ENCODE measurements at regions of chr3 and their contacts with region 1.

Region 1: GRCh38 chr3:132722164-132723024 is at the start of gene NPHP3:
- DNase-seq: peak; percentile 75 to 95 (median 87)
- ATAC-seq: peak; percentile 87
- H3K4me3 ChIP-seq: peak within 1 kb of the TSS; percentile 88
- H3K4me3 Mint-ChIP-seq: peak within 1 kb of the TSS; percentile 86 to 95 (median 92)
- H3K27ac ChIP-seq: peak within 1 kb of the TSS; percentile 85
- H3K27ac Mint-ChIP-seq: peak within 1 kb of the TSS; percentile 84 to 95 (median 89)
- H3K4me1 ChIP-seq: peaks cover 16 to 26% of the 10 kb centered on the region in 2 donors
- H3K4me1 Mint-ChIP-seq: peaks cover 17 to 49% (median 43%) of the 10 kb centered on the region in 7 donors
- H3K27me3 ChIP-seq: no peaks in the 10 kb centered on the region
- H3K27me3 Mint-ChIP-seq: peaks cover 0 to 6% (median 0%) of the 10 kb centered on the region in 5 donors
- total RNA-seq, gene NPHP3: 21.8 to 78.9 (median 26.1) TPM

Region 2: DNA sequence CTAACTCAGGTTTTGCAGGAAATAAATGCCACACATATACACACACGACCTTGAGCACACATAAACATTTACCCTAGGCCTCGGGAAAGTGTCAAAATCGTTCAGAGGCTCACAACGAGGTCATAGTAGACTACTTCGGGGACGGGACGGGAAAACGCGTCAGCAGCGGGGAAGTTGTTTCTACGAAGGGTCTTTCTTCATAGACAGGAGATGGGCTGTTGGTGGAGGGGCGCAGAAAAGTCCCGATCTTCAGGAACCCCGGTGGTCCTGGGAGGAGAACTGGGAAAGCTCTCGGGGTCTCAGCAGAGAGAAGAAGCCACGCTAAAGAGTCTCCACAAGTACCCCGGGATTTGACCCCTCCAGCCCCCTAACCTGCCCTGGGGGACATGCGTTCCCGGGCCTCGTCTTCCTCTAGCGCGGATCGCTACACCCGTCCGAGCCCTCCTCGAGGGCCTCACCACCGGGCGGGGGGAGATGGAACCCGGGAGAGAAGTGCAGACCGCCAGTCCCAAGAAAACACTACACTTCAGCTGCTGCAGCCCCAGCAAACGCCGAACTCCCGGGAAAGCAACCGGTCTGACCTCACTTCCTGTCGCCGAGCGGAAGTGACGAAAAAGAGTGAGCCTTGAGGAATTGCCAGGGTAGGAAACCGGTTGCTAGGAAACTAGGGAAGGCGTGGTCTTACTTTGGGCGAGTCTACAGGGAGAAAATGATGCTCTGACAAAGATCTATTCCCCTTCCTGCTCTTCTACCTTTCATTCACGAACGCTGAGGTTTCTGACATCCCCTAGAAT is 1976.0 kb before region 1 on chr3 and contains the start of gene PIK3R4:
- CTCF ChIA-PET with region 1: no interaction called
- POLR2A ChIA-PET with region 1: no interaction called
- intact Hi-C with region 1: loop called (anchors 5 kb)
- DNase-seq: peak; percentile 79 to 98 (median 92)
- ATAC-seq: peak; percentile 87
- H3K4me3 ChIP-seq: peak within 1 kb of the TSS; percentile 87
- H3K4me3 Mint-ChIP-seq: peak within 1 kb of the TSS in 9 of 10 donors; percentile 82 to 97 (median 93)
- H3K27ac ChIP-seq: peak within 1 kb of the TSS; percentile 89
- H3K27ac Mint-ChIP-seq: peak within 1 kb of the TSS; percentile 89 to 99 (median 94)
- H3K4me1 ChIP-seq: peaks cover 5 to 20% of the 10 kb centered on the region in 2 donors
- H3K4me1 Mint-ChIP-seq: peaks cover 35 to 62% (median 50%) of the 10 kb centered on the region in 7 donors
- H3K27me3 ChIP-seq: no peaks in the 10 kb centered on the region
- H3K27me3 Mint-ChIP-seq: peaks cover 0 to 3% (median 0%) of the 10 kb centered on the region in 5 donors
- total RNA-seq, gene PIK3R4: 15.5 to 33.6 (median 27.3) TPM

Region 3: GRCh38 chr3:131502530-131503245 is 1219.7 kb before region 1 on chr3 and contains the start of gene MRPL3:
- CTCF ChIA-PET with region 1: no interaction called
- POLR2A ChIA-PET with region 1: no interaction called
- intact Hi-C with region 1: loop called in 1 of 2 experiments (anchors 10 kb)
- DNase-seq: peak; percentile 68 to 82 (median 78)
- ATAC-seq: peak; percentile 90
- H3K4me3 ChIP-seq: peak within 1 kb of the TSS; percentile 79
- H3K4me3 Mint-ChIP-seq: peak within 1 kb of the TSS; percentile 94 to 100 (median 98)
- H3K27ac ChIP-seq: peak within 1 kb of the TSS; percentile 72
- H3K27ac Mint-ChIP-seq: peak within 1 kb of the TSS; percentile 86 to 98 (median 96)
- H3K4me1 ChIP-seq: peaks cover 23% of the 10 kb centered on the region in 2 donors
- H3K4me1 Mint-ChIP-seq: peaks cover 15 to 65% (median 53%) of the 10 kb centered on the region in 7 donors
- H3K27me3 ChIP-seq: no peaks in the 10 kb centered on the region
- H3K27me3 Mint-ChIP-seq: no peaks in the 10 kb centered on the region
- total RNA-seq, gene MRPL3: 33.8 to 79.2 (median 52.7) TPM

Region 4: GRCh38 chr3:133384331-133385027 is 662.1 kb after region 1 on chr3:
- CTCF ChIA-PET with region 1: no interaction called
- POLR2A ChIA-PET with region 1: no interaction called
- intact Hi-C with region 1: loop called (anchors 1 kb)
- DNase-seq: peak in 4 of 9 donors; percentile 4 to 28 (median 4)
- ATAC-seq: no peak
- H3K4me3 ChIP-seq: no peak overlapping the region
- H3K4me3 Mint-ChIP-seq: no peak overlapping the region
- H3K27ac ChIP-seq: no peak overlapping the region
- H3K27ac Mint-ChIP-seq: no peak overlapping the region
- H3K4me1 ChIP-seq: no peaks in the 10 kb centered on the region
- H3K4me1 Mint-ChIP-seq: no peaks in the 10 kb centered on the region
- H3K27me3 ChIP-seq: no peaks in the 10 kb centered on the region
- H3K27me3 Mint-ChIP-seq: peaks cover 0 to 6% (median 0%) of the 10 kb centered on the region in 5 donors

Region 5: GRCh38 chr3:133413161-133414020 is 691.0 kb after region 1 on chr3:
- CTCF ChIA-PET with region 1: no interaction called
- POLR2A ChIA-PET with region 1: no interaction called
- intact Hi-C with region 1: no loop called
- DNase-seq: no peak
- ATAC-seq: peak; percentile 47
- H3K4me3 ChIP-seq: no peak overlapping the region
- H3K4me3 Mint-ChIP-seq: peak overlapping the region in 6 of 10 donors; percentile 3 to 47 (median 20)
- H3K27ac ChIP-seq: no peak overlapping the region
- H3K27ac Mint-ChIP-seq: peak overlapping the region in 3 of 9 donors; percentile 7 to 29 (median 27)
- H3K4me1 ChIP-seq: no peaks in the 10 kb centered on the region
- H3K4me1 Mint-ChIP-seq: peaks cover 0 to 17% (median 10%) of the 10 kb centered on the region in 7 donors
- H3K27me3 ChIP-seq: no peaks in the 10 kb centered on the region
- H3K27me3 Mint-ChIP-seq: peaks cover 0 to 17% (median 0%) of the 10 kb centered on the region in 5 donors

Region 6: DNA sequence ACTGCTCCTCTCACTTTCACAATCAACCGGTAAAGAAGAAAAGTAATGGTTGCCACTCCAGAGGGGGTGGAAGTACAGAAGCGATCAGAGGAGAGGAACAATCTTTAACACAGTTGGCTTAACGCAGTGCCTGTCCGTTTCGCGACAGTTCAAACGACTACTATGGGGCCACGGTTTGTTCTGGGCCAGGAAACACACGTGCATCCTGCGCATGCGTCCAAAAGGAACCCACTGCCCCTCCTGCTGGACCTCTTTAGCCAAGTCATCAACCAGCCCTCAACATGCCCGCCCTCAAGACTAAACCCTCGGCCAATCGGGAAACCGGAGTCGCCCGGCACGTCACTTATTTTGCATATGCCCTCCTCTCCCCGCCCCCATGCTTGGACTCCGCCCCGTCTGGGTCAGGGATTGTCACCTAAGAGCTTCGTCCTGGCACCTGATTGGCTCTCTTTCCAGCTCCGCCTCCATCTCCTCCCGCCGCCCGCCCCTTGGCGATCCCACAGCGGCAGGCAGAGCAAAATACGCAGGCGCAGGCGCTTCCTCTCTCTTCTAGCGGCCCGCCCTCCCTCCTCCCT is 850.7 kb after region 1 on chr3:
- CTCF ChIA-PET with region 1: interaction called, 4 read pairs
- POLR2A ChIA-PET with region 1: interaction called, 8 read pairs
- intact Hi-C with region 1: loop called (anchors 1 kb)
- DNase-seq: peak; percentile 99 to 100 (median 100)
- ATAC-seq: peak; percentile 90
- H3K4me3 ChIP-seq: peak overlapping the region; percentile 59
- H3K4me3 Mint-ChIP-seq: peak overlapping the region; percentile 74 to 99 (median 89)
- H3K27ac ChIP-seq: peak overlapping the region; percentile 90
- H3K27ac Mint-ChIP-seq: peak overlapping the region; percentile 91 to 100 (median 98)
- H3K4me1 ChIP-seq: peaks cover 29 to 38% of the 10 kb centered on the region in 2 donors
- H3K4me1 Mint-ChIP-seq: peaks cover 26 to 67% (median 53%) of the 10 kb centered on the region in 7 donors
- H3K27me3 ChIP-seq: no peaks in the 10 kb centered on the region
- H3K27me3 Mint-ChIP-seq: no peaks in the 10 kb centered on the region

Region 7: DNA sequence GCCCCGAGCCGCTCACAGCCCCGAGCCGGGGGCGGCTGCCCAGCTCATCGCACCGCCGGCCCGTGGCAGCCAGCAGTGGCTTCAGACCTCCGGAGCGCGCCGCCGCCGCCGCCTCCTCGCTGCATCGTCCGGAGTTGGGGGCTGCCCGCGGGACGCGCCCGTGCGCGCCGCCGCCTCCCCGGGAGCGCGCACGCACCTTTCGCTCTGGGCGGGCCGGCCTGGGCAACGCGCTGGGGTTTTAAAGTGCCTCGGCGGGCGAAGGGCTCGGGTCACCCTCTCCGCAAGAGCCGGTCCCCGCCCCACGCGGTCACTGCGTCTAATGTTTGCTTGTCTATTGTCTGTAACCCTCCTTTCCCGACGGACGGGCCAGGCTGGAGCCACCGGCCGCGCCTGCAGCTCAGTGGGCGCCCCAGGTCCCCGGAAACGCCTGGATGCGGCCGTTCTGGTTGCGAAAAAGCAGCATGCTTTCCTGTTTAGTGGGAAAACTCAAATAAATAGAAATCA is 1528.4 kb after region 1 on chr3 and contains the start of gene RYK:
- CTCF ChIA-PET with region 1: no interaction called
- POLR2A ChIA-PET with region 1: no interaction called
- intact Hi-C with region 1: loop called in 1 of 2 experiments (anchors 2 kb)
- DNase-seq: peak; percentile 65 to 85 (median 79)
- ATAC-seq: peak; percentile 93
- H3K4me3 ChIP-seq: peak within 1 kb of the TSS; percentile 78
- H3K4me3 Mint-ChIP-seq: peak within 1 kb of the TSS; percentile 90 to 99 (median 96)
- H3K27ac ChIP-seq: peak within 1 kb of the TSS; percentile 86
- H3K27ac Mint-ChIP-seq: peak within 1 kb of the TSS; percentile 72 to 99 (median 95)
- H3K4me1 ChIP-seq: peaks cover 12 to 14% of the 10 kb centered on the region in 2 donors
- H3K4me1 Mint-ChIP-seq: peaks cover 25 to 62% (median 57%) of the 10 kb centered on the region in 7 donors
- H3K27me3 ChIP-seq: no peaks in the 10 kb centered on the region
- H3K27me3 Mint-ChIP-seq: peaks cover 0 to 54% (median 0%) of the 10 kb centered on the region in 5 donors
- total RNA-seq, gene RYK: 10.7 to 53.5 (median 50.5) TPM

Measured in naive thymus-derived CD4-positive, alpha-beta T cell (primary cell).